H1 (cell line): ENCODE measurements at regions of chr2 and their contacts with region 1.

Region 1: DNA sequence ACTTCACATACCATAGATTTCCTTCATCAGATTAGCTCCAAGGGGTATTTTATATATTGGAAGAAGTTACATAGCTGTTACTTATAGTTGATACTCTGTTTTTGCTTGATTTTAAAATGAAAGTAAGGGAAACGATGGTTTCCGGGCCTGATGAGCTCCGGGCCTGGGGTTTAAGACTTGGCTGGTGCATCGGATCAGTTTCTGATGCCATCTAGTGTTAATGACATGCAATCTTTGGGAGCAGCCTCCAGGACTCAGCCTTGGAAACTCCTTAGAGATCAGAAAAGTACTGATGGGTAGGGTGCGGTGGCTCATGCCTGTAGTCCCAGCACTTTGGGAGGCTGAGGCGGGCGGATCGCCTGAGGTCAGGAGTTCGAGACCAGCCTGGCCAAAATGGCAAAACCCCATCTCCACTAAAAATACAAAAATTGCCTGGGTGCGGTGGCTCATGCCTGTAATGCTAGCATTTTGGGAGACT is 47.1 kb upstream of the CNOT11 start:
- DNase-seq: peak; percentile 19 to 52
- H3K4me3 ChIP-seq: no peak overlapping the region
- H3K27ac ChIP-seq: no peak overlapping the region
- H3K4me1 ChIP-seq: no peaks in the 10 kb centered on the region
- H3K27me3 ChIP-seq: no peaks in the 10 kb centered on the region
- CTCF ChIP-seq: peak; percentile 26 to 66 (median 62)
- EP300 ChIP-seq: no peak
- POLR2A ChIP-seq: no peak
- RAD21 ChIP-seq: peak; percentile 69 to 84

Region 2: GRCh38 chr2:101012706-101013181 is 192.8 kb before region 1 on chr2:
- CTCF ChIA-PET with region 1: interaction called, 18 read pairs
- POLR2A ChIA-PET with region 1: interaction called, 8 read pairs
- DNase-seq: peak in 1 of 2 experiments; percentile 60
- H3K4me3 ChIP-seq: no peak overlapping the region
- H3K27ac ChIP-seq: no peak overlapping the region
- H3K4me1 ChIP-seq: no peaks in the 10 kb centered on the region; a peak in 1 of 7 replicates
- H3K27me3 ChIP-seq: no peaks in the 10 kb centered on the region
- CTCF ChIP-seq: peak in 2 of 3 experiments; percentile 55 to 77; a peak in 3 of 4 replicates
- EP300 ChIP-seq: no peak
- POLR2A ChIP-seq: no peak
- RAD21 ChIP-seq: peak; percentile 84 to 89

Region 3: GRCh38 chr2:101030863-101031554 is 174.6 kb before region 1 on chr2:
- CTCF ChIA-PET with region 1: interaction called, 32 read pairs
- POLR2A ChIA-PET with region 1: no interaction called
- DNase-seq: no peak
- H3K4me3 ChIP-seq: no peak overlapping the region
- H3K27ac ChIP-seq: no peak overlapping the region
- H3K4me1 ChIP-seq: peaks cover 2 to 9% (median 4%) of the 10 kb centered on the region in 4 experiments; a peak in 5 of 7 replicates
- H3K27me3 ChIP-seq: no peaks in the 10 kb centered on the region
- CTCF ChIP-seq: no peak
- EP300 ChIP-seq: no peak
- POLR2A ChIP-seq: no peak
- RAD21 ChIP-seq: no peak

Region 4: DNA sequence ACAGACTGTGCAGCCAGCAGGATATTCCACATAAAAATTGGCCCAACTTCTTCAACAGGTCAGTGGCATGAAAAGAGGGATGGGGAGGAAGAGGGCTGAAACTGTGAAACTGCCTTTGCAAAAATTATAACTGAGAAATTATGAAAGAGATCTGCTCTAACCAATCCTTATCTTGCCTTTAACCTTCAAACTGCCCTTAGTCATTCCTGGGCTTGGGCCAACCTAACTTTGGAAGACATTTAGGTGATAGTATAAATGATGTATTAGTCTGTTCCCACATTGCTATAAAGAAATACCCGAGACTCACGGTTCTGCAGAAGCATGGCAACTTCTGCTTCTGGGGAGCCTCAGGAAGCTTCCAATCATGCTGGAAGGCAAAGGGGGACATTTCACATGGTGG is 129.0 kb before region 1 on chr2:
- CTCF ChIA-PET with region 1: no interaction called
- POLR2A ChIA-PET with region 1: no interaction called
- DNase-seq: no peak
- H3K4me3 ChIP-seq: no peak overlapping the region
- H3K27ac ChIP-seq: no peak overlapping the region
- H3K4me1 ChIP-seq: no peaks in the 10 kb centered on the region
- H3K27me3 ChIP-seq: no peaks in the 10 kb centered on the region
- CTCF ChIP-seq: no peak
- EP300 ChIP-seq: no peak
- POLR2A ChIP-seq: no peak
- RAD21 ChIP-seq: no peak

Region 5: GRCh38 chr2:101151141-101151858 is 54.3 kb before region 1 on chr2 and contains the start of gene TBC1D8:
- CTCF ChIA-PET with region 1: interaction called, 10 read pairs
- POLR2A ChIA-PET with region 1: no interaction called
- DNase-seq: peak in 1 of 2 experiments; percentile 89
- H3K4me3 ChIP-seq: peak within 1 kb of the TSS; percentile 62 to 81 (median 72)
- H3K27ac ChIP-seq: no peak within 1 kb of the TSS
- H3K4me1 ChIP-seq: peaks cover 6 to 12% (median 9%) of the 10 kb centered on the region in 4 experiments
- H3K27me3 ChIP-seq: peaks cover 0 to 8% (median 2%) of the 10 kb centered on the region in 4 experiments; a peak in 4 of 7 replicates
- CTCF ChIP-seq: no peak
- EP300 ChIP-seq: no peak
- POLR2A ChIP-seq: peak in 1 of 2 experiments; percentile 42; a peak in 1 of 3 replicates
- RAD21 ChIP-seq: no peak
- total RNA-seq, gene TBC1D8: 21.8 and 24.0 TPM in 2 replicates

Region 6: DNA sequence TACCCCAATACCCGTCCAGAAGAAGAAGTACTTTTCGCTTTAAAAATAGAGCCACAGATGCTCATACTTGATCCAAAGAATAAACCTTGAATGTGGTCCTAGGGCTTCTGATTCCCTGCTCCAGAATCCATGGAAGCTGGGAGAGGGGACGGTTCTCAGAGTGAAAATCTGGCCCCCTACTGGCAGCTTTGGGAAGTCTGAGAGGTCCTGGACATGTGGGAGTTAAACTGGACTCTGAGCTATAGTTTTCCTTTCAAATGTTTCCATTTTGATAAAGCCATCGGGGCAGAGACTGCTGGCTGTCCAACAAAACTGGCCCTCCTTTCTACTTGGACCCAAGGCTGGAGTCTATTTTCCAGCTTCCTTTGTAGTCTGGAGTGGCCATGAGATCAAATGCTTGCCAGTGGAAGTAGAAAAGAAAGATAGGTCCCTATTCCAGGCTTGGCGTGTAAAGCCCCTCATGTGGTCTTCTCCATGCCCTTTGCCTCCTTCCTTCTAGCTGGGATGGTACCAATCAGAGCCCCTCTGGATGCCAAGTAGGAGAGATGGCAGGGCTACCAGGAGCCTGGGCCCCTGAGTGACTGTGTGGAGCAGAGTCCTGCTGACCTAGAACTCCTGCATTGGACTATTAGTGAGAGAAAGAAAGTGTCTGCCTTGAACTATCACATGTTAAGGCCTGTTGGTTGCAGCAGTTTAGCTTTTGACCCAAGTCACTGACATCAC is 16.7 kb before region 1 on chr2:
- CTCF ChIA-PET with region 1: interaction called, 136 read pairs
- POLR2A ChIA-PET with region 1: interaction called, 3 read pairs
- DNase-seq: peak in 1 of 2 experiments; percentile 84
- H3K4me3 ChIP-seq: no peak overlapping the region
- H3K27ac ChIP-seq: no peak overlapping the region
- H3K4me1 ChIP-seq: peaks cover 0 to 10% (median 2%) of the 10 kb centered on the region in 4 experiments; a peak in 4 of 7 replicates
- H3K27me3 ChIP-seq: no peaks in the 10 kb centered on the region
- CTCF ChIP-seq: peak; percentile 58 to 70 (median 69)
- EP300 ChIP-seq: no peak
- POLR2A ChIP-seq: no peak
- RAD21 ChIP-seq: peak; percentile 38 to 62; a peak in 3 of 4 replicates

Region 7: DNA sequence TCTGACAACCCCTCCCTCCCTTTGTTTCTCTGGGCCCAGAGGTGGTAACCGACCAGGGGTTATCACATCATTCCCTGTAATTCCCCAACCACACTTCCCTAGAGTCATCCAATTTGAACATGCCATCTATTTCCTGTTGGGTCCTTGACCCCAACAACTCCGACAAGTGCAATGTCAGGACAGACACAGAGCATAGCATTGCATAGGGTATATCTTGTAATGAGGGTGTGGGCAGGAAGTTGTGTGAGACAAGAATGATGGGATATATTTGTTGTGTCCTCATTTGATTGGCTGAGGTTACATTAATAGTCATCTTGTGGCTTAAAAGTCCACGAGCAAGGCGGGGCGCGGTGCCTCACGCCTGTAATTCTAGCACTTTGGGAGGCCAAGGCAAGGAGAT is 13.7 kb after region 1 on chr2:
- CTCF ChIA-PET with region 1: interaction called, 80 read pairs
- POLR2A ChIA-PET with region 1: interaction called, 3 read pairs
- DNase-seq: no peak
- H3K4me3 ChIP-seq: no peak overlapping the region
- H3K27ac ChIP-seq: no peak overlapping the region
- H3K4me1 ChIP-seq: no peaks in the 10 kb centered on the region
- H3K27me3 ChIP-seq: no peaks in the 10 kb centered on the region
- CTCF ChIP-seq: no peak
- EP300 ChIP-seq: no peak
- POLR2A ChIP-seq: no peak
- RAD21 ChIP-seq: no peak